Gastrocnemius medialis (tissue), 4 donors: ENCODE measurements at regions of chrX and their contacts with region 1.

Region 1: DNA sequence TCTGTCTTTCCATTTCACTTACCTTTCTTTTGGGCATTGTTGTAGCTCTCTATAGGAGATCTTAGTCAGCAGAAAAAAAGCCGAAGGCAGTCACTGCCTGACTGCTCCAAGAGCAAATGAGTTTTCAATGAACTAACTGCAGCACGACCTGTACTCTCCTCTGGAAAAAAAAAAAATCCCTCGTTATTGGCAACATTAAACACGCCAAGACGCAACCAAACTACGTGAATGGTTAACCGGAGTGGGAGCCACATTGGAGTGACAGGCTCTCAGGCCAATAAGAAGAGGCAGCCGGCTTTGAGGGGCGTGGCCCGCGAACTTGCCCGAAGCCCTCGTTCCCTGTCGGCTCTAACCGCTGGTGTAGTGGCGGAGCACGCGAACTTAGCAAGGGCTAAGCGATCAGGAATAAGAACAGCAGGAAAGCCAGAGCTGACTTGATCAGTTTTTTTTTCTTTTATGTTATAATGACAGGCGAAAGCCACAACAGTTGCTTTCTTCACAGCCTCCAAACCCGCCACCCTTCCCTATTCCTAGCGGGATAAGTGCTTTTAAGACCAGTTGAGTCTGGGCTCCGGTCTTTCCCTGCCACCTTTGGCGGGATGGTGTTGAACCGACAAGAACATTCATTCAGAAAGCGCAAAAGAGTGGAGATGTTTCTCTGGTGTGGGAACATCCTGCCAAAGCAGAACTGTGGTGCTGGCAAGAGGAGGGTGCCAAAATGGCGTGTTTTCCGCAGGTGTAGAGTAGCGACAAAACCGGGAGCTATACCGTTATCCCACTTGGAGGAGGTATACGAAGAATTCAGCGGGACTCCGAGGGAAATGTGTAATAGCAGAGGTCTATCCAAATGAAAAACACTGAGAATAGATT is 80.0 kb downstream of the HMGN5 start:
- DNase-seq: peak; percentile 80 to 89
- ATAC-seq: peak; percentile 96 to 99
- H3K4me3 ChIP-seq: peak overlapping the region; percentile 55 to 65 (median 63)
- H3K27ac ChIP-seq: peak overlapping the region; percentile 58 to 70 (median 66)
- H3K4me1 ChIP-seq: peaks cover 0 to 5% of the 10 kb centered on the region in 2 donors
- H3K27me3 ChIP-seq: no peaks in the 10 kb centered on the region
- CTCF ChIP-seq: no peak
- POLR2A ChIP-seq: peak in 1 of 2 donors; percentile 51

Region 2: GRCh38 chrX:80808160-80808735 is 313.5 kb before region 1 on chrX:
- in situ Hi-C with region 1: loop called in 1 of 4 experiments (anchors 25 kb)
- intact Hi-C with region 1: loop called (anchors 1 kb)
- DNase-seq: peak; percentile 69 to 80
- ATAC-seq: peak; percentile 82 to 83
- H3K4me3 ChIP-seq: peak overlapping the region; percentile 65 to 87 (median 82)
- H3K27ac ChIP-seq: peak overlapping the region; percentile 80 to 91 (median 90)
- H3K4me1 ChIP-seq: peaks cover 0 to 5% of the 10 kb centered on the region in 2 donors
- H3K27me3 ChIP-seq: no peaks in the 10 kb centered on the region
- CTCF ChIP-seq: no peak
- POLR2A ChIP-seq: no peak